Left ventricle myocardium superior (tissue), 1 donor: ENCODE measurements at regions of chr9 and their contacts with region 1.

Region 1: GRCh38 chr9:19239955-19240354 is 9.5 kb downstream of the DENND4C start:
- DNase-seq: no peak
- ATAC-seq: no peak

Region 2: GRCh38 chr9:18863791-18864190 is 376.2 kb before region 1 on chr9:
- intact Hi-C with region 1: no loop called
- DNase-seq: no peak
- ATAC-seq: no peak

Region 3: DNA sequence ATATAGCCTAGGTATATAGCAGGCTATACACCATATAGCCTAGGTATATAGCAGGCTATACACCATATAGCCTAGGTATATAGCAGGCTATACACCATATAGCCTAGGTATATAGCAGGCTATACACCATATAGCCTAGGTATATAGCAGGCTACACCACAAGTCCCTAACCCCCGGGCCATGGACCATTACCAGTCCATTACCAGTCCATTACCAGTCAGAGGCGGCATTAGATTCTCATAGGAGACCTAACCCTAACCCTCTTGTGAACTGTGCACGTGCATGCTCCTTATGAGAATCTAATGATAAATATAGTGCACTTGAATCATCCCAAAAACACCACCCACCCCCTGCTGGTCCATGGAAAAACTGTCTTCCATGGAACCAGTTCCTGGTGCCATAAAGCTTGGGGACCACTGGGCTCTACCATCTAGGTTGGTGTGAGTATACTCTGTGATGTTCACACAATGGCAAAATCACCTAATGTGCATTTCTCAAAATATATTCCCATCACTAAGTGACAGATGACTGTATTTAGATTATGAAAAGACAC is 117.4 kb before region 1 on chr9:
- intact Hi-C with region 1: loop called (anchors 5 kb)
- DNase-seq: no peak
- ATAC-seq: no peak

Region 4: GRCh38 chr9:19201899-19202891 is 37.8 kb before region 1 on chr9:
- intact Hi-C with region 1: no loop called
- DNase-seq: no peak
- ATAC-seq: no peak